Posterior vena cava (tissue), 2 donors: ENCODE measurements at regions of chrX and their contacts with region 1.

Region 1: GRCh38 chrX:44025555-44025954 is 52.4 kb upstream of the NDP start:
- DNase-seq: no peak

Region 2: GRCh38 chrX:43969504-43970501 is 55.8 kb before region 1 on chrX:
- intact Hi-C with region 1: loop called in 1 of 2 experiments (anchors 10 kb)
- DNase-seq: no peak